Activated CD4-positive, alpha-beta T cell treated with anti-CD3 and anti-CD28 coated beads for 36 hours (primary cell): ENCODE measurements at regions of chr5 and their contacts with region 1.

Region 1: DNA sequence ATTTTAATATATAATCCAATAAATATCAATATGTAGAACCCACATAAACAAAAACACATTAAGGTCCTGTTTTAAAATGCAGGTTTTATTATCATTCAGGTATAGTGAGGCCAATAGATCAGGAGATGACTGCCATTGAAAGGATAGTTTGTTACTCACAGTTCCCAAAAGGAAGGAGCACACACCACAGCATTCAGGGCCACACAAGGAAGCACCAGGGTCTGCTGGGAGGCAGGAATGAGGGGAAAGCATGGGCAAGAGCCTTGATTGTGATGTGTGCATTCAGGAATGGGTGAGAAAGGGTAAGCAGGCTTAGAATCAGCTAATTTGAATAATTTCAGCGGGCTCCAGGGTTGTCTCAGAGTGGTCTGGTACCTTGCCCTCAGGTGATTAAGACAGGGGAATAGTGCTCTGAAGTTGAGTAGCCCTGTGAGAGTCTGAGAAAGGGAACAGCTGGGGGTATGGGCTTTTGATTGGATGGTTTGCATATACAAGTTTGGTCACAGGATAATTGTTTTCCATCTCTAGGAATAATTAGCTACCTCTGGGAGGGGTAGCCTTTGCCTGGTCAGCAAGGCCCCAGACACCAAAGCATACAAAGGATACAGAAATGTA is 19.8 kb upstream of the OTULIN start:
- DNase-seq: no peak
- ATAC-seq: no peak
- H3K4me3 Mint-ChIP-seq: no peak overlapping the region
- H3K27ac Mint-ChIP-seq: no peak overlapping the region
- H3K4me1 Mint-ChIP-seq: no peaks in the 10 kb centered on the region
- H3K27me3 Mint-ChIP-seq: peaks cover 4% of the 10 kb centered on the region

Region 2: GRCh38 chr5:13987843-13988464 is 656.8 kb before region 1 on chr5:
- CTCF ChIA-PET with region 1: no interaction called
- POLR2A ChIA-PET with region 1: no interaction called
- intact Hi-C with region 1: loop called (anchors 1 to 5 kb)
- DNase-seq: peak; percentile 61
- ATAC-seq: no peak
- H3K4me3 Mint-ChIP-seq: no peak overlapping the region
- H3K27ac Mint-ChIP-seq: no peak overlapping the region
- H3K4me1 Mint-ChIP-seq: no peaks in the 10 kb centered on the region
- H3K27me3 Mint-ChIP-seq: peaks cover 4% of the 10 kb centered on the region

Region 3: GRCh38 chr5:14357851-14358250 is 286.9 kb before region 1 on chr5:
- CTCF ChIA-PET with region 1: interaction called, 124 read pairs
- POLR2A ChIA-PET with region 1: no interaction called
- intact Hi-C with region 1: no loop called
- DNase-seq: no peak
- ATAC-seq: no peak
- H3K4me3 Mint-ChIP-seq: no peak overlapping the region
- H3K27ac Mint-ChIP-seq: no peak overlapping the region
- H3K4me1 Mint-ChIP-seq: no peaks in the 10 kb centered on the region
- H3K27me3 Mint-ChIP-seq: no peaks in the 10 kb centered on the region

Region 4: GRCh38 chr5:14379739-14380497 is 264.8 kb before region 1 on chr5:
- CTCF ChIA-PET with region 1: interaction called, 12 read pairs
- POLR2A ChIA-PET with region 1: no interaction called
- intact Hi-C with region 1: no loop called
- DNase-seq: no peak
- ATAC-seq: no peak
- H3K4me3 Mint-ChIP-seq: no peak overlapping the region
- H3K27ac Mint-ChIP-seq: no peak overlapping the region
- H3K4me1 Mint-ChIP-seq: no peaks in the 10 kb centered on the region
- H3K27me3 Mint-ChIP-seq: no peaks in the 10 kb centered on the region

Region 5: GRCh38 chr5:14408969-14409586 is 235.7 kb before region 1 on chr5:
- CTCF ChIA-PET with region 1: interaction called, 10 read pairs
- POLR2A ChIA-PET with region 1: no interaction called
- intact Hi-C with region 1: no loop called
- DNase-seq: no peak
- ATAC-seq: no peak
- H3K4me3 Mint-ChIP-seq: no peak overlapping the region
- H3K27ac Mint-ChIP-seq: no peak overlapping the region
- H3K4me1 Mint-ChIP-seq: peaks cover 14% of the 10 kb centered on the region
- H3K27me3 Mint-ChIP-seq: no peaks in the 10 kb centered on the region

Region 6: DNA sequence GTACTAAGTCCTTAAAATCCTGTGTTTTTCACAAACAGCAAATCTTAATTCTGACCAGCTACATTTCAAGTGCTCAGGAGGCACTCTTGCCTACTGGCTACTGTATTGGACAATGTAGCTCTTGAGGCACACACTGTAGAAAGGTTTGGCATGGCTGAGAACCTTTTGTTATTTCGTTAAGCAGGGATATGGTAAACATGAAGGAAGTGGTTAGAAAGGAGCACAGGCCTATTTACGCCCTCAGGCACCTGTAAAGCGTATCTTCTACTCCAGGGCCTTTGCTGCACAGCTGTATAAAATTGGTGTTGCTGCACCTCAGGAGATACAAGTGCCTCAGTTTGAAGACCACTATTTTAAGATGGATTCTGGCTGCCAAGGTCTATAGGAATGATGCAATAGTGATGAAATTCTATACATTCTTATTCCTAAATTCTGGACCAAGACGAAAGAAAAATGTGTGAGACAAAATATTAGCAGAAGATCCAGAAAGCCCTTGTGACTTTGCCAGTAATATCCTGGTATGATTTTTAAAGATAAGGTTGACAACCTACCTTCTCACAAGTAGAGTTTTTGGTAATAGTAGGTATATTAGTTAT is 10.5 kb after region 1 on chr5:
- CTCF ChIA-PET with region 1: interaction called, 19 read pairs
- POLR2A ChIA-PET with region 1: no interaction called
- intact Hi-C with region 1: no loop called
- DNase-seq: no peak
- ATAC-seq: no peak
- H3K4me3 Mint-ChIP-seq: no peak overlapping the region
- H3K27ac Mint-ChIP-seq: no peak overlapping the region
- H3K4me1 Mint-ChIP-seq: peaks cover 32% of the 10 kb centered on the region
- H3K27me3 Mint-ChIP-seq: peaks cover 2% of the 10 kb centered on the region

Region 7: GRCh38 chr5:15031151-15031550 is 386.4 kb after region 1 on chr5:
- CTCF ChIA-PET with region 1: no interaction called
- POLR2A ChIA-PET with region 1: no interaction called
- intact Hi-C with region 1: no loop called
- DNase-seq: no peak
- ATAC-seq: no peak
- H3K4me3 Mint-ChIP-seq: no peak overlapping the region
- H3K27ac Mint-ChIP-seq: no peak overlapping the region
- H3K4me1 Mint-ChIP-seq: no peaks in the 10 kb centered on the region
- H3K27me3 Mint-ChIP-seq: peaks cover 17% of the 10 kb centered on the region

Region 8: GRCh38 chr5:15151653-15152052 is 506.9 kb after region 1 on chr5:
- CTCF ChIA-PET with region 1: no interaction called
- POLR2A ChIA-PET with region 1: no interaction called
- intact Hi-C with region 1: no loop called
- DNase-seq: no peak
- ATAC-seq: no peak
- H3K4me3 Mint-ChIP-seq: no peak overlapping the region
- H3K27ac Mint-ChIP-seq: no peak overlapping the region
- H3K4me1 Mint-ChIP-seq: no peaks in the 10 kb centered on the region
- H3K27me3 Mint-ChIP-seq: no peaks in the 10 kb centered on the region

Region 9: DNA sequence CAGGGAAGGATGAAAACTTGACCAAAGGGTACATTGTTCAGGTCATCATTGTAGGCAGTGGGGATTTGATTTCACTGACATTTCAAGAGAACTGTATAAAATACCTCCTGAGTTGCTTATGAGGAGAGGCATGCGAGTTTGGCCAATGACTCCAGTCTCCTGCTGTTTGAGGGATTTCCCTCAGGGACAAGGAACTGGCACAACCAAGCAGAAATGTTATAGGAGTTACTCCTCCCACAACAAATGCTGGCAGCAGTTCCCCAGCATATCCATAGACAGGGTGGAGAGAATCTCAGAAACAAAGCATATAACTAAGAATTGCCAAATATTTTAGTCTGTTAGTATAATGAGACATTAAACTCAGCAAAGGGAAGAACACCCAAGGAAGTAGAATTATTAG is 808.1 kb after region 1 on chr5:
- CTCF ChIA-PET with region 1: no interaction called
- POLR2A ChIA-PET with region 1: no interaction called
- intact Hi-C with region 1: no loop called
- DNase-seq: no peak
- ATAC-seq: no peak
- H3K4me3 Mint-ChIP-seq: no peak overlapping the region
- H3K27ac Mint-ChIP-seq: no peak overlapping the region
- H3K4me1 Mint-ChIP-seq: no peaks in the 10 kb centered on the region
- H3K27me3 Mint-ChIP-seq: no peaks in the 10 kb centered on the region